Left colon (tissue), 2 donors: ENCODE measurements at regions of chr16 and their contacts with region 1.

Region 1: GRCh38 chr16:50024684-50025536 is at the start of gene CNEP1R1:
- DNase-seq: peak; percentile 94 to 95
- ATAC-seq: peak; percentile 99
- total RNA-seq, gene CNEP1R1: 17.8 to 19.2 TPM

Region 2: GRCh38 chr16:50210266-50211038 is 185.5 kb after region 1 on chr16:
- intact Hi-C with region 1: loop called in 1 of 2 experiments (anchors 2 kb)
- DNase-seq: peak; percentile 80 to 84
- ATAC-seq: peak; percentile 82

Region 3: GRCh38 chr16:50665128-50665878 is 640.4 kb after region 1 on chr16:
- intact Hi-C with region 1: loop called in 1 of 2 experiments (anchors 10 kb)
- DNase-seq: peak; percentile 53 to 85
- ATAC-seq: peak; percentile 84